Left ventricle myocardium superior (tissue), 1 donor: ENCODE measurements at regions of chr15 and their contacts with region 1.

Region 1: DNA sequence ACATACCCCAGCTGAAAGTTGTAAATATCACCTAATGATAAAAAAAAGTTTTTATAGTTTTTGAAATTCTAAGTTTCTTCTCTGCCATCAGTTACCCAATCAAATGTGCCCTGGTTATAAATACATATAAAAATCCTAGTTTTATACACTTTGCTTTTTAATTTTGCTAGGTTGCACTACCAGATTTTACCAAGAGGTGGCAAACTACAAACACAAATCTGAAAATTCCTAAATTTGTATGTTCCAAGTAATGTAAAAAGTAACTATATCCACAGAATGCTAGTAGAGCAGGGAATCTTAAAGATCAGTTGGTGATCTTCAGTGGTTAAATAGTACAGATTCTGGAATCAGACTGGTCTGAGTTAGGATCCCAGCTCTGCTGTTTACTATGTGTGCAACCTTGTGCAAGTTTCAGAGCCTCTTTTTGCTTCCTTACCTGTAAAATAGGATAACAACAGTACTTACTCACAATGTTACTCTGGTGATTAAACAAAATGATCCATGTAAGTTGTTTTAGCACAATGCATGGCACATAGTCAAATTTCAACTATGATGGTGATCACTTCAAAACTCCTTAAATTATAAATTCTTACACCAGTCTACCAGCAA is 11.0 kb downstream of the TRPM7 start:
- DNase-seq: no peak
- ATAC-seq: no peak

Region 2: DNA sequence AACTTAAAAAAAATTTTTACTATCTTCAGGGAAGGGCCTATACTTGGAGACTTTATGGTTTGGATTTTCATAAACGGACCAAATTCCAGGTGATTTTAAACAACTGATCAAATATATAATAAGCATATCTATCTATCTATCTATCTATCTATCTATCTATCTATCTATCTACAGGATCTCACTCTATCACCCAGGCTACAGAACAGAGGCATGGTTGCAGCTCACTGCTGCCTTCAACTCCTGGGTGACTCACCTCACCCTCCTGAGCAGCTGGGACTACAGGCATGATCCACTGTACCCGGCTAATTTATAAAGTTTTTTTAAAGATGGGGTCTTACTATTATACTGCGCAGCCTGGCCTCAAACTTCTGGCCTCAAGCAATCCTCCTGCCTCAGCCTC is 83.1 kb after region 1 on chr15:
- intact Hi-C with region 1: loop called (anchors 10 kb)
- DNase-seq: no peak
- ATAC-seq: no peak